ENCODE measurements at regions of chr9 and their contacts with region 1.

Region 1: DNA sequence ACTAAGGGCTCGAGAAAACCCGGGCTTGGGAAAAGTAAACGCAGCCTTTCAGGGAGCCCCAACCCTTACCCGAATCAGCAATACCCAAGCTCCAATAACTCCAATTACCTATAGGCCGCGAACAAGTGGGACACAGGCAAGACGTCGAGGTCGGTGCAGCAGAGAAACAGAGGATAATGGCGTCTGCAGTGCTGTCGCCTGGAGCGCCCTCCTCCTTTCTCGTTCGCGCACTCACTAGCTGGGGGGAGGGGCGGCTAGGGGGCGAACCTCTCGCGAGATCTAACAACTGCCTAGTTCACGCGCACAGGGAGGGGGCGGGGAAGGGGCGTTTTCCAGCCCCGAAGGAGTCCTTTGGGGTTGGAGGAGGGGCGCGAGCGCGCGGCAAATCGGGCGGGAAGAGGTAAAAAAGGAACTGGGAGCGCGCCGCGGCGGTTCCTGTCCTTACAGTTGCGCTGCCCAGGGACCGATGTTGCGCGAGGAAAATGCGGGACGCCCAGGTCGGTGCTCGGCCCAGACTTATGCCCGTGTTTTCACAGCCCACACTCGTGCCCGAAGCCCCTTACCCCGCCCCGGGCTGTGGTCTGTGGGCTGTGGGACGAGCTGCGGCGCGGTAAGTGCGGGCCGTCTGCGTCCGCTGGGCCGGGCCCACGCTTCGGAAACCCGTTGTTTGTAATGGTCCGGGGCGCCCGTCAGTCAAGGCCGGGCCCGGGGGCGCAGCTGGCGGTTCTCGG is at the start of gene RMI1:
- DNase-seq: peak; percentile 100
- H3K4me3 Mint-ChIP-seq: peak within 1 kb of the TSS; percentile 89
- H3K27ac Mint-ChIP-seq: peak within 1 kb of the TSS; percentile 99
- H3K4me1 Mint-ChIP-seq: peaks cover 37% of the 10 kb centered on the region
- H3K27me3 Mint-ChIP-seq: no peaks in the 10 kb centered on the region
- total RNA-seq, gene RMI1: 19.2 to 19.3 TPM

Region 2: DNA sequence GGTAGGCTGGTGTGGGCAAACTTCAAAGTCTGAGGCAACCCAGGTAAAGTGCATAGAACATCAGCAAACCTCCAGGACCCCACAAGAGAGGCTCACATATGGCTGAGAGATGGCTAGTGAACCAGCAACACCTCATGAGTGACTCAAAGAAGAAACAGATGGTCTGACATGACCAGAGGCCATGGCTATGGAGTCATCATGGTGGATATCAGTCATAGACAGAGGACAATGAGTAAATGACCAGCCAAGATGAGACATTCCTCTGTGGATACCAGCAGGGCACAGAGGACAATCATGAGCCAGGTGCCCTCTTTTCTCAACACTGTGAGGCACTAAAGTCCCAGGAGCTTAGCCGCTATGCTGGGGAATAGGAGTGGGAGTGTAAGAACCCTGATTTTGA is 1098.4 kb before region 1 on chr9:
- CTCF ChIA-PET with region 1: no interaction called
- intact Hi-C with region 1: no loop called
- DNase-seq: no peak
- H3K4me3 Mint-ChIP-seq: no peak overlapping the region
- H3K27ac Mint-ChIP-seq: no peak overlapping the region
- H3K4me1 Mint-ChIP-seq: no peaks in the 10 kb centered on the region
- H3K27me3 Mint-ChIP-seq: no peaks in the 10 kb centered on the region

Region 3: DNA sequence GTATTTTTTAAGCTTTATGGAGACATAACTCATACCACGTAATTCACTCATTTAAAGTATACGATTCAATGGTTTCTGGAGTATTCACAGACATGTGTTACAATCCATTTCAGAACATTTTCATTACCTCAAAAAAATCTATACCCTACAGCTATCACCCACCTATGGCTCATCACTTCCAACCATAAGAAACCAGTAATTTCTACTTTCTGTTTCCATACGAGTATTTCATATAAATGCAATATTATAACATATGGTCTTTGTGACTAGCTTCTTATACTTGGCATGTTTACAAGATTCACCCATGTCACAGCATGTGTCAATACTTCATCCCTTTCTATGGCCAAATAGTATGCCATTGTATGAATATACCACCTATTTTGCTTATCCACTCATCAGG is 291.6 kb before region 1 on chr9:
- CTCF ChIA-PET with region 1: no interaction called
- intact Hi-C with region 1: loop called (anchors 5 kb)
- DNase-seq: no peak
- H3K4me3 Mint-ChIP-seq: no peak overlapping the region
- H3K27ac Mint-ChIP-seq: peak overlapping the region; percentile 44
- H3K4me1 Mint-ChIP-seq: peaks cover 66% of the 10 kb centered on the region
- H3K27me3 Mint-ChIP-seq: no peaks in the 10 kb centered on the region

Region 4: GRCh38 chr9:83937911-83938323 is 42.6 kb before region 1 on chr9:
- CTCF ChIA-PET with region 1: no interaction called
- intact Hi-C with region 1: loop called (anchors 1 kb)
- DNase-seq: peak; percentile 35
- H3K4me3 Mint-ChIP-seq: no peak overlapping the region
- H3K27ac Mint-ChIP-seq: no peak overlapping the region
- H3K4me1 Mint-ChIP-seq: no peaks in the 10 kb centered on the region
- H3K27me3 Mint-ChIP-seq: no peaks in the 10 kb centered on the region

Region 5: DNA sequence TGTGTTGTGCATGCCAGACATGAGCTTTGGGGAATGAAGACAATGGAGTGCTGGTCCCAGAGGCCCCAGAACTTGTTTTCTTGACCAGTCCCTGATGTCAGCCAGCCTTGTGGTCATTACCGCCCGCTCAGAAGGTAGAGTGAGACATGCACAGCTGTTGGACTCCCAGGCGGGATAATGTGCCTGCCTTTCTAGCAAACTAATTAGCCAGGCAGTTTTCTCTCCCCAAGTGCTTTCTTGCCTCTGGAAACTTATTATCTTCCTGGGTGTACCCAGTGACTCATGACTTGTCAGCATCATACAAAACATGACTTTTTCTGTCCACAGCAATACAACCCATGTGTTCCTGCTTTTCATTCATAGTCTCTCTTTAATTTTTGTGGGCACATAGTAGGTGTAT is 131.2 kb after region 1 on chr9:
- CTCF ChIA-PET with region 1: no interaction called
- intact Hi-C with region 1: no loop called
- DNase-seq: no peak
- H3K4me3 Mint-ChIP-seq: no peak overlapping the region
- H3K27ac Mint-ChIP-seq: no peak overlapping the region
- H3K4me1 Mint-ChIP-seq: peaks cover 16% of the 10 kb centered on the region
- H3K27me3 Mint-ChIP-seq: peaks cover 26% of the 10 kb centered on the region

Region 6: DNA sequence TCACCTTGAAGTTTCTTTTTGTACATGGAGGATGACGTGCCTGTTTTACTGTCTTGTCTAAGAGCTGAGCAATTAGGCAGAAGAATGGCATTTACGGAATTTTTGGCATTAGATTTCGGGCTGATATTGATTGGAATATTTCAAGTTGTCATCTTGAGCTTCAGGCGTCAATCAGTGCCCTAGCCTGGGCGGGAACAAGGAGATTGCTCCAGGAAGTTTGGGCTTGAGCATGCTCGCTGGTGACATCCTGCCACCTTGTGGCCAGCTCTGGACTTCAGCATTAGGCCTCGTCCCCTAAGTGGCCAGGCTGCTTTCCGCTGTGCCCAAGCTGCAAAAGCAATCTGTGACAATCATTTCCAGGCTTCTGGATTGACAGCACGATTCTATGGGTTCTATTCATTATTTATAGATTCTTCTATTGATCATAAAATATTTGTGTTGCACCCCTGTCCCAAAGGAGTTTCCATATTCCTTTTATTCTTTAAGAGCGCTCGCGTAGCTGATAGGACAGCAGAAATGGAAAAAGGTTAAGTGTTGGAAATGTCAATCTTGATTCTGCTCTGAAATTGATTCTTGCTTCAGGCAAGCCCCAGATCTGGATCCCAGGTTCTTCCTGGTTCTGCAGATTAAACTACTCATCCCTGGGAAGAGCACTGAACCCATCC is 280.7 kb after region 1 on chr9:
- CTCF ChIA-PET with region 1: no interaction called
- intact Hi-C with region 1: loop called (anchors 2 kb)
- DNase-seq: peak; percentile 76
- H3K4me3 Mint-ChIP-seq: peak overlapping the region; percentile 7
- H3K27ac Mint-ChIP-seq: no peak overlapping the region
- H3K4me1 Mint-ChIP-seq: peaks cover 7% of the 10 kb centered on the region
- H3K27me3 Mint-ChIP-seq: no peaks in the 10 kb centered on the region

Region 7: DNA sequence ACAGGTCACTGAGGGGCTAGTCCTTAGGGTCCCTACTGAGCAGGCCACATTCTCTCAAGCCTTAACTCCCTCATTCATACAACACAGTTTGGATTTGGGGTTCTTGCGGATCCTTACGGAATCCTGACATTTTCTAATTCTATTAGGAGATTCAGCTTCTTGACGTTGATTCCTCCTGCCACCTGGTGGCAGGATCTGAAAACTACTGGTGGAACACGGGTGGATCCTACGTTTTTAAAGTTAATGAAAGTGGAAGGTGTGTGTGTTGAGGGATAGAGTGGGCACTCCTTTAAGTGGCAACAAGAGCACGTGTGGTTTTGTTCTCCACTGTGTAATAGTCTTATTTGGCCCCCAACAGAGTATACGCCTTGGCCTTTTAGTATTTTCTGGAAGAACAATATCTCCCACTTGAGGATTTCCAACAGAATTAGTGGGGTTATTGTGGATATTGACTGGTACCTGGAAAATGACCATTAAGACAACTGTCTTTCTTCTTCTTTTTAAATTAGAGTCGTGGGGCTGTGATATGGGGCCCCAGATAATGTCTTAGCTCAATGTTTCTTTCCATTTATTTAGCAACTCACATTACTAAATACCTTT is 334.8 kb after region 1 on chr9:
- CTCF ChIA-PET with region 1: no interaction called
- intact Hi-C with region 1: loop called (anchors 5 kb)
- DNase-seq: peak; percentile 79
- H3K4me3 Mint-ChIP-seq: no peak overlapping the region
- H3K27ac Mint-ChIP-seq: no peak overlapping the region
- H3K4me1 Mint-ChIP-seq: peaks cover 14% of the 10 kb centered on the region
- H3K27me3 Mint-ChIP-seq: no peaks in the 10 kb centered on the region